CD8-positive, alpha-beta T cell (primary cell): ENCODE measurements at regions of chr21 and their contacts with region 1.

Region 1: DNA sequence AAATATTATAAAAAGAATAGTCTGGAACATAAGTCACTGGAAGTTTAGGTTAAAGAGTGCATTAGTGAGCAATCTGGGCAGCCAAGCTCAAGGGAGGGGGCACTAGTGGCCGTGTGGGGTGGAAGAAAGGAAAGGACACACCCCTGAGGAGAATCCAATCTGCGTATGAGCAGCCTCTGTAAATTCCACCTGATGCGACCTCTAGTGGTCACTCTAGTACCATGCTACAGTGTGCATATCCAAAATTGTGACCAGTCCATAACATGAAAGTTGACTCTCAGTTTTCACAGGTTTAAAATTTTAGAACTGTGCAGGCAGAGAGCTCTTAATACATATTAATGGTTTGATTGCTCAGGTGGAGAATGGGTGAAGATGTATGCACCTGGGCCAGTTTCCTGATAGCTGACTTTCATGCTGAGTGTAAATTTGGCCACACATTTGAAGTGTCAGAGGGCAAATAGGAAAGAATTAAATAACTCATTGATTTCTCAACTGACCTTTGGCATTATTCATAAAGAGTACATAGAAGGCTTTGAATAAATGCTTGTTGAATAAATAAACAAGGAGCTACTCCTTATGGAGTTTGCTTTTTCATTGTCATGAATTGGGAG is 105.9 kb upstream of the C21orf91 start:
- DNase-seq: peak in 8 of 9 experiments; percentile 18 to 75 (median 47)
- ATAC-seq: peak; percentile 87
- H3K4me3 ChIP-seq: no peak overlapping the region
- H3K4me3 Mint-ChIP-seq: no peak overlapping the region
- H3K27ac ChIP-seq: no peak overlapping the region
- H3K27ac Mint-ChIP-seq: no peak overlapping the region
- H3K4me1 ChIP-seq: no peaks in the 10 kb centered on the region
- H3K4me1 Mint-ChIP-seq: peaks cover 2% of the 10 kb centered on the region
- H3K27me3 ChIP-seq: no peaks in the 10 kb centered on the region
- H3K27me3 Mint-ChIP-seq: no peaks in the 10 kb centered on the region
- CTCF ChIP-seq: peak; percentile 76

Region 2: DNA sequence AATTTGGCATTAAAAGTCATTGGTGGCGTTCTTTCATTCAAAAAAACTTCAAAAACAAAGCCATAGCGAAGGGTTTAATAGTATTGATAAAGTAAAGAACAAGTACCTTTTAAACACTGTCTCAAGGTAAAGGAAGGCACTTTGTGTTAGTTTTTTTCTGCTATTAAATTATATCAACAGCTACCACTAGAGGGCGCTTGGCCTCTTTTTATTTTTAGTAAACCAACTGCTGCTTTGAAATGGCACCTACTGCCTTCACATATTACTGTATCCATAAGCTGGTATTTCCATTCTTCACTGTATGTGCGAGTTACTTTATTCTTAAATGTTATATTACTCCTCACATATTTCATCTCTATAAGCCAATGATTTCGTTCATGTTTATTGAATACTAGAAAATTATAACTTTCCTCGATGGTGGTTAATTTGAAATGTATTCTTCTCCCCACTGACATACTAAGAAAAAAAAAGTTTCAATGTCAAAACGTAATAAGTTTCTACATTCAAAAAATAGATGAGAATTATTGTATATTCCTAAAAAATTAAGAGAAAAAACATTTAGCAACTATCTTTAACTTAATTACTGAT is 538.0 kb before region 1 on chr21:
- CTCF ChIA-PET with region 1: no interaction called
- POLR2A ChIA-PET with region 1: no interaction called
- intact Hi-C with region 1: loop called in 1 of 2 experiments (anchors 10 kb)
- DNase-seq: peak in 6 of 9 experiments; percentile 18 to 65 (median 52)
- ATAC-seq: peak; percentile 55
- H3K4me3 ChIP-seq: no peak overlapping the region
- H3K4me3 Mint-ChIP-seq: no peak overlapping the region
- H3K27ac ChIP-seq: no peak overlapping the region
- H3K27ac Mint-ChIP-seq: no peak overlapping the region
- H3K4me1 ChIP-seq: no peaks in the 10 kb centered on the region
- H3K4me1 Mint-ChIP-seq: no peaks in the 10 kb centered on the region
- H3K27me3 ChIP-seq: no peaks in the 10 kb centered on the region
- H3K27me3 Mint-ChIP-seq: peaks cover 4% of the 10 kb centered on the region
- CTCF ChIP-seq: peak; percentile 94

Region 3: DNA sequence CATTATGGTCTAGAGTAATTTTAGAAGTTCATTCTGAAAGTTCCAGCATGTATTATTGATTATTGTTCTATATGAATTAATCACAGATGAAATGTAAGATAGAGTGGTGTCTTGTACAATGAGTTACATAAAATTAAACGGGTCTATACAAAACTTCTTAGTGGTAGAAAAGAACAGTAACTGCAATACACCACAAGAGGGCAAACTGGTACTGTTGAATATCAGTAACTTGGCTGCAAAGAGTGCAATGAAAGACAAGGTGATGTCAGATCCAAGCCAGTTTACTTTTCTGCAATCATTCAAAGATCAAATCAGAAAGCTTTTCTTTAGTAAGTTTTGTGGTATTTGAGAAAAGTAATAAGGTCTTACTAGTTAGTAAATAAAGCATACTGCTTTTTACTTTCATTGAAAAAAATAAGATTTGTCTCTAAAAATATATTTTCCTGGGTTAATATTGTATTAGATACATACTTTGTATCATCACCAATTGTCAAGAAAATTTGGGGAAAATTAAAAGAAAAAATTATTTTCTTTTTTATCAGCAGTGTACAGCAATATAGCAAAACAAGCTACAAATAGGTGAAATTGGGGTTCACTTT is 246.0 kb before region 1 on chr21:
- CTCF ChIA-PET with region 1: interaction called, 68 read pairs
- POLR2A ChIA-PET with region 1: no interaction called
- intact Hi-C with region 1: loop called (anchors 1 kb)
- DNase-seq: peak in 3 of 9 experiments; percentile 13 to 80 (median 75)
- ATAC-seq: peak; percentile 96
- H3K4me3 ChIP-seq: no peak overlapping the region
- H3K4me3 Mint-ChIP-seq: no peak overlapping the region
- H3K27ac ChIP-seq: no peak overlapping the region
- H3K27ac Mint-ChIP-seq: no peak overlapping the region
- H3K4me1 ChIP-seq: no peaks in the 10 kb centered on the region
- H3K4me1 Mint-ChIP-seq: no peaks in the 10 kb centered on the region
- H3K27me3 ChIP-seq: no peaks in the 10 kb centered on the region
- H3K27me3 Mint-ChIP-seq: no peaks in the 10 kb centered on the region
- CTCF ChIP-seq: peak; percentile 92

Region 4: DNA sequence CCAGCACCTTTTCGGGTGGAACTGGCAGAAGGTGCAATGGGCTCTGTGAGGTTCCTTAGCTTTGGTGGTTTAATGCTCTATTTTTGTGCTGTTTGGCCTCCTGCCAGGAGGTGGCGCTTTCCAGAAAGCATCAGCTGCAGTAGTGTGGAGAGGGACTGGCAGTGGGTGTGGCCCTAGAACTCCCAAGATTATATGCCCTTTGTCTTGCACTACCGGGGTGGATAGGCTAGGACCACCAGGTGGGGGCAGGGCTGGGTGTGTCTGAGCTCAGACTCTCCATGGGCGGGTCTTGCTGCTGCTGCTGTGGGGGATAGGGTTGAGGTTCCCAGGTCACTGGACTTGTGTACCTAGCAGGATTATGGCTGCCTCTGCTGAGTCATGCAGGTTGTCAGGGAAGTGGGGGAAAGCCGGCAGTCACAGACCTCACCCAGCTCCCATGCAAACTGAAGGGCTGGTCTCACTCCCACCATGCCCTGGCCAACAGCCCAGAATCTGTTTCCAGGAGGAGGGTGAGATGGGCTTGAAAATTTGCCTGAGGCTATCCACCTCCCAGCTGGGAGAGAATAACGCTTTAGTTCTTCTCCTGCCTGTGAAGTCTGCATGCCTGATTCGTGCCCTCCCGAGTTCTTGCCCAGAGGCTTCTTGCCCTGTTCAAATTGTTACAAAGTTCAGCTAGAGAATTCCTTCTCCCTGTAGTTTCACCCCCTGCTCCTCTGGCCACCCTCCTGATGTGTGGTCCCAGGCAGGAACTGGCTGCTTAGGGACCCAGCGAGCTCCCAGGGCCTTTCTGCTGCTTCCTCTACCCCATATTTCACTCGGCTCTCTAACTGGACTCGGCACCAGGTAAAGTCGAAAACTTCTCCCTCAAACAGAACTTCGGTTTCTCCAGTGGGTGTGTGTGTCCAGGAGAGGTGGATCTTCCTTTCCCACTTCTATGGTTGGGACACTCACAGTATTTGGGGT is 235.9 kb before region 1 on chr21:
- CTCF ChIA-PET with region 1: interaction called, 13 read pairs
- POLR2A ChIA-PET with region 1: no interaction called
- intact Hi-C with region 1: no loop called
- DNase-seq: peak; percentile 3 to 73 (median 42)
- ATAC-seq: no peak
- H3K4me3 ChIP-seq: no peak overlapping the region
- H3K4me3 Mint-ChIP-seq: no peak overlapping the region
- H3K27ac ChIP-seq: no peak overlapping the region
- H3K27ac Mint-ChIP-seq: no peak overlapping the region
- H3K4me1 ChIP-seq: peaks cover 10% of the 10 kb centered on the region
- H3K4me1 Mint-ChIP-seq: peaks cover 37% of the 10 kb centered on the region
- H3K27me3 ChIP-seq: no peaks in the 10 kb centered on the region
- H3K27me3 Mint-ChIP-seq: no peaks in the 10 kb centered on the region
- CTCF ChIP-seq: peak; percentile 32

Region 5: GRCh38 chr21:17903029-17903806 is 21.9 kb before region 1 on chr21:
- CTCF ChIA-PET with region 1: interaction called, 26 read pairs
- POLR2A ChIA-PET with region 1: no interaction called
- intact Hi-C with region 1: loop called in 1 of 2 experiments (anchors 2 kb)
- DNase-seq: peak in 2 of 9 experiments; percentile 57 to 66
- ATAC-seq: peak; percentile 56
- H3K4me3 ChIP-seq: no peak overlapping the region
- H3K4me3 Mint-ChIP-seq: no peak overlapping the region
- H3K27ac ChIP-seq: no peak overlapping the region
- H3K27ac Mint-ChIP-seq: no peak overlapping the region
- H3K4me1 ChIP-seq: no peaks in the 10 kb centered on the region
- H3K4me1 Mint-ChIP-seq: peaks cover 4% of the 10 kb centered on the region
- H3K27me3 ChIP-seq: no peaks in the 10 kb centered on the region
- H3K27me3 Mint-ChIP-seq: no peaks in the 10 kb centered on the region
- CTCF ChIP-seq: peak; percentile 60

Region 6: DNA sequence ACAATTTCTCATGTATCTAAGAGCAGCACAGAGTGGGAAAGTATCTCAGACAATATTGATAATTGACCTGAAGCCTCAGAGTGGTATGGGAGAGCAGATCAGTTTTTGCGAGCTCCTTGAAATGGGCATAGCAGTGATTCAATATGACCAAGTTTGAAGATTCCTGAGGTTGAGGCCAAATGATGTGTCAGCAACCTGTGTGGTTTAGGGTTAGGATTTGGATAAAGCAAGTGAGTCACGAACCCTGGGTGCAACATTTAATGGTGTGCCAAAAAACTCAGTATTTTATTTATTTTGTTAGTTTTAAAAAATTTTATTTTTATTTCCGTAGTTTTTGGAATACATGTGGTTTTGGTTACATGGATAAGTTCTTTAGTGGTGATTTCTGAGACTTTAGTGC is 13.5 kb before region 1 on chr21:
- CTCF ChIA-PET with region 1: interaction called, 38 read pairs
- POLR2A ChIA-PET with region 1: no interaction called
- intact Hi-C with region 1: no loop called
- DNase-seq: no peak
- ATAC-seq: no peak
- H3K4me3 ChIP-seq: no peak overlapping the region
- H3K4me3 Mint-ChIP-seq: no peak overlapping the region
- H3K27ac ChIP-seq: no peak overlapping the region
- H3K27ac Mint-ChIP-seq: no peak overlapping the region
- H3K4me1 ChIP-seq: no peaks in the 10 kb centered on the region
- H3K4me1 Mint-ChIP-seq: no peaks in the 10 kb centered on the region
- H3K27me3 ChIP-seq: no peaks in the 10 kb centered on the region
- H3K27me3 Mint-ChIP-seq: peaks cover 7% of the 10 kb centered on the region
- CTCF ChIP-seq: no peak

Region 7: DNA sequence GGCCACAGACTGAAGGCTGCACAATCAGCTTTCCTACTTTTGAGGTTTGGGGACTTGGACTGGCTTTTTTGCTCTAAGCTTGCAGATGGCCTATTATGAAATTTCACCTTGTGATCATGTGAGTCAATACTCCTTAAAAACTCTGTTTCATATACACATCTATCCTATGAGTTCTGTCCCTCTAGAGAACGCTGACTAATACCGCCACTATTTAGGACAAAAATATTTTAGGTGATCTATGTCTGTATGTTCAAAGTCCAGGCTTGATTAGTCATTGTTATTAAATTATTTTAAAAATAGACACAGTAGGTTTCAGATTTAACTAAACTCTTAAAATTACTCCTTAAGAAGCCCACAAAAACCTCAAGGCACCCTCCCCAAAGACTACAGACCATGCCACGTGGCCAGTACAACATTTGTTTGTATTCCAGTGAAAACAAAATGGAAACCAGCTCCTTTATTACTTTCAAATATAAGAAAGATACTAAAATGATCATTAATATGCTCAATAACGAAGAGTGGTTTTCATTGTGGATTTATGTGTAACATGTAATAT is 415.4 kb after region 1 on chr21:
- CTCF ChIA-PET with region 1: no interaction called
- POLR2A ChIA-PET with region 1: no interaction called
- intact Hi-C with region 1: no loop called
- DNase-seq: no peak
- ATAC-seq: no peak
- H3K4me3 ChIP-seq: no peak overlapping the region
- H3K4me3 Mint-ChIP-seq: no peak overlapping the region
- H3K27ac ChIP-seq: no peak overlapping the region
- H3K27ac Mint-ChIP-seq: no peak overlapping the region
- H3K4me1 ChIP-seq: no peaks in the 10 kb centered on the region
- H3K4me1 Mint-ChIP-seq: no peaks in the 10 kb centered on the region
- H3K27me3 ChIP-seq: no peaks in the 10 kb centered on the region
- H3K27me3 Mint-ChIP-seq: no peaks in the 10 kb centered on the region
- CTCF ChIP-seq: no peak